ENCODE measurements at regions of chr14 and their contacts with region 1.

Region 1: GRCh38 chr14:35404449-35405303 is at the start of gene NFKBIA:
- DNase-seq: peak; percentile 94 to 96 (median 95)
- H3K4me3 ChIP-seq: peak within 1 kb of the TSS; percentile 88 to 98
- H3K4me3 Mint-ChIP-seq: peak within 1 kb of the TSS; percentile 93 to 97 (median 95)
- H3K27ac ChIP-seq: peak within 1 kb of the TSS; percentile 100
- H3K27ac Mint-ChIP-seq: peak within 1 kb of the TSS; percentile 99 to 100 (median 99)
- H3K4me1 ChIP-seq: peaks cover 60% of the 10 kb centered on the region
- H3K4me1 Mint-ChIP-seq: peaks cover 34 to 71% (median 49%) of the 10 kb centered on the region in 4 donors
- H3K27me3 ChIP-seq: no peaks in the 10 kb centered on the region
- H3K27me3 Mint-ChIP-seq: peaks cover 0 to 2% of the 10 kb centered on the region in 2 donors
- total RNA-seq, gene NFKBIA: 119 to 120 TPM

Region 2: GRCh38 chr14:34875031-34875922 is 529.4 kb before region 1 on chr14 and contains the start of gene BAZ1A:
- CTCF ChIA-PET with region 1: no interaction called
- POLR2A ChIA-PET with region 1: interaction called, 3 read pairs
- intact Hi-C with region 1: loop called (anchors 2 kb)
- DNase-seq: peak; percentile 53 to 67 (median 57)
- H3K4me3 ChIP-seq: peak within 1 kb of the TSS; percentile 64 to 98
- H3K4me3 Mint-ChIP-seq: peak within 1 kb of the TSS; percentile 95 to 100 (median 100)
- H3K27ac ChIP-seq: peak within 1 kb of the TSS; percentile 100
- H3K27ac Mint-ChIP-seq: peak within 1 kb of the TSS; percentile 98 to 100 (median 99)
- H3K4me1 ChIP-seq: peaks cover 38% of the 10 kb centered on the region
- H3K4me1 Mint-ChIP-seq: peaks cover 17 to 48% (median 33%) of the 10 kb centered on the region in 4 donors
- H3K27me3 ChIP-seq: no peaks in the 10 kb centered on the region
- H3K27me3 Mint-ChIP-seq: no peaks in the 10 kb centered on the region
- total RNA-seq, gene BAZ1A: 54.1 to 56.4 TPM

Region 3: GRCh38 chr14:35121887-35122695 is 282.6 kb before region 1 on chr14 and contains the starts of genes PPP2R3C and PRORP:
- CTCF ChIA-PET with region 1: interaction called, 5 read pairs
- POLR2A ChIA-PET with region 1: interaction called, 96 read pairs
- intact Hi-C with region 1: loop called (anchors 1 kb)
- DNase-seq: peak; percentile 93 to 97 (median 95)
- H3K4me3 ChIP-seq: peak within 1 kb of the TSS; percentile 94 to 99
- H3K4me3 Mint-ChIP-seq: peak within 1 kb of the TSS; percentile 97 to 100 (median 98)
- H3K27ac ChIP-seq: peak within 1 kb of the TSS; percentile 99
- H3K27ac Mint-ChIP-seq: peak within 1 kb of the TSS; percentile 99 to 100 (median 100)
- H3K4me1 ChIP-seq: peaks cover 72% of the 10 kb centered on the region
- H3K4me1 Mint-ChIP-seq: peaks cover 42 to 86% (median 64%) of the 10 kb centered on the region in 4 donors
- H3K27me3 ChIP-seq: no peaks in the 10 kb centered on the region
- H3K27me3 Mint-ChIP-seq: no peaks in the 10 kb centered on the region
- total RNA-seq, gene PPP2R3C: 36.1 to 41.0 TPM
- total RNA-seq, gene PRORP: 38.9 to 39.4 TPM

Region 4: DNA sequence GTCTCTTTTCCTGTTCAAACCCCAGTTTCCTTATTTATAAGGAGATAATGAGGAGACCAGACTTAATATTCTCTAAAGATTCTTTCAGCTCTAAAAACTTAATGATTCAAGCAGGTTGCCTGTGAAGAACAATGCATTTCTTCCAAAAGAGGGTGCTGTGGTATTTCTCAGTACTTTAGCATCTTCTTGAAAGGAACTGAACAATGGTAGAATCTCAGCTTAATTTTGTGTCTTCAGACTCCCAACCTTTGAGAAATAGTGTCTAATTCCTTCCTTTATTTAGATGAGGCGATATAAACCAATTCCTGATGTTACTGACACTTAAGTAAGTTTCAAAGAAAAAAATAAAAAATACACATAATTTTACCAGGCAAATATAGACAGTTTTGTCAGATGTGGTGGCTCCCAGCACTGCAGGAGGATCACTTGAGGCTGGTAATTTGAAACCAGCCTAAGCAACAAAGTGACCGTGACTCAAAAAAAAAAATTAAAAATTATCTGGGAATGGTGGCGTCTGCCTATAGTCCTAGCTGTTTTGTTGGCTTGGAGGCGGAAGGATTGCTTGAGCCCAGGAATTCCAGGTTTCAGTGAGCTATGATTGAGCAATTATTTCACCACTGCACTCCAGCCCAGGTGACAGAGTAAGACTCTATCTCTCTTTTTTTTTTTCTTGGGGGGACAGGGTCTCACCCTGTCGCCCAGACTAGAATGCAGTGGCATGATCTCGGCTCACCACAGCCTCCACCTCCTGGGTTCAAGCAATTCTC is 189.4 kb before region 1 on chr14:
- CTCF ChIA-PET with region 1: interaction called, 6 read pairs
- POLR2A ChIA-PET with region 1: interaction called, 4 read pairs
- intact Hi-C with region 1: loop called (anchors 1 kb)
- DNase-seq: peak in 1 of 5 donors; percentile 24
- H3K4me3 ChIP-seq: no peak overlapping the region
- H3K4me3 Mint-ChIP-seq: no peak overlapping the region
- H3K27ac ChIP-seq: no peak overlapping the region
- H3K27ac Mint-ChIP-seq: peak overlapping the region in 4 of 7 donors; percentile 15 to 81 (median 68)
- H3K4me1 ChIP-seq: peaks cover 7% of the 10 kb centered on the region
- H3K4me1 Mint-ChIP-seq: peaks cover 10 to 29% (median 15%) of the 10 kb centered on the region in 4 donors
- H3K27me3 ChIP-seq: no peaks in the 10 kb centered on the region
- H3K27me3 Mint-ChIP-seq: no peaks in the 10 kb centered on the region

Region 5: DNA sequence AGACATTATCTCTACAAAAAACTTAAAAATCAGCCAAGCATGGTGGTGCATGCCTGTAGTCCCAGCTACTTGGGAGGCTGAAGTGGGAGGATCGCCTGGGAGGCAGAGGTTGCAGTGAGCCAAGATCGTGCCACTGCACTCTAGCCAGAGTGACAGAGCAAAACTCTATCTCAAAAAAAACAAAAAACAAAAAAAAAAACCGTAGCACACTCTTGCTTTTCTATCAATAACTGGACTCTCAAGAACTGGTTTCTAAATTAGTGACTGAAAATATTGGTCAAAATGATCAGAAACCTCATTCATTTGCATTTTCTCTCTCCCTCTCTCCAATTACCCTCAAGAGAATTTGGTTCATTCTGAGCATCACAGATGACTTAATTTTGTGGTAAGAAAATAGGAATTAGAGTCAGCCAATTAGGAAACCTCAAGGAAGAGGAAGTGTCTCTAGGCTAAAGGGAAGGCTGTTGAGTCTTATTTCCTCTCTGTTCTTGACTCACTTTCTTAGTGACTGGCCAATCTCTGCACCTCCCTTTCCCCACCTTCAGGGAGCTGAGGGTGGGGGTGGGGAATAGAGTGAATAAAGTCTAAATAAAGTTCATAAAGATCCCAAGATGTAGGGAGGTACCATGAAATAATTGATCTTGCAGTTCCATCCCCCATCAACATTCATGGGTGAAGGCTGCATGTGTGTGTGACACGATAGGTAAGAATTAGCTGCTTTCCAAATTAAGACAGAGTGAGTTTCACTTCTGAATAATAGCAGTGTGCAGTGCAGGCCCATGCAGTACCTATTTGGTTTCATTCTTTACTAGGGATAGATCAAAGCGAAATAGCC is 119.3 kb before region 1 on chr14:
- CTCF ChIA-PET with region 1: interaction called, 11 read pairs
- POLR2A ChIA-PET with region 1: interaction called, 167 read pairs
- intact Hi-C with region 1: no loop called
- DNase-seq: peak in 1 of 5 donors; percentile 6
- H3K4me3 ChIP-seq: no peak overlapping the region
- H3K4me3 Mint-ChIP-seq: peak overlapping the region in 7 of 8 donors; percentile 0 to 67 (median 48)
- H3K27ac ChIP-seq: peak overlapping the region; percentile 50
- H3K27ac Mint-ChIP-seq: peak overlapping the region; percentile 67 to 93 (median 85)
- H3K4me1 ChIP-seq: peaks cover 36% of the 10 kb centered on the region
- H3K4me1 Mint-ChIP-seq: peaks cover 30 to 45% (median 35%) of the 10 kb centered on the region in 4 donors
- H3K27me3 ChIP-seq: no peaks in the 10 kb centered on the region
- H3K27me3 Mint-ChIP-seq: no peaks in the 10 kb centered on the region

Region 6: DNA sequence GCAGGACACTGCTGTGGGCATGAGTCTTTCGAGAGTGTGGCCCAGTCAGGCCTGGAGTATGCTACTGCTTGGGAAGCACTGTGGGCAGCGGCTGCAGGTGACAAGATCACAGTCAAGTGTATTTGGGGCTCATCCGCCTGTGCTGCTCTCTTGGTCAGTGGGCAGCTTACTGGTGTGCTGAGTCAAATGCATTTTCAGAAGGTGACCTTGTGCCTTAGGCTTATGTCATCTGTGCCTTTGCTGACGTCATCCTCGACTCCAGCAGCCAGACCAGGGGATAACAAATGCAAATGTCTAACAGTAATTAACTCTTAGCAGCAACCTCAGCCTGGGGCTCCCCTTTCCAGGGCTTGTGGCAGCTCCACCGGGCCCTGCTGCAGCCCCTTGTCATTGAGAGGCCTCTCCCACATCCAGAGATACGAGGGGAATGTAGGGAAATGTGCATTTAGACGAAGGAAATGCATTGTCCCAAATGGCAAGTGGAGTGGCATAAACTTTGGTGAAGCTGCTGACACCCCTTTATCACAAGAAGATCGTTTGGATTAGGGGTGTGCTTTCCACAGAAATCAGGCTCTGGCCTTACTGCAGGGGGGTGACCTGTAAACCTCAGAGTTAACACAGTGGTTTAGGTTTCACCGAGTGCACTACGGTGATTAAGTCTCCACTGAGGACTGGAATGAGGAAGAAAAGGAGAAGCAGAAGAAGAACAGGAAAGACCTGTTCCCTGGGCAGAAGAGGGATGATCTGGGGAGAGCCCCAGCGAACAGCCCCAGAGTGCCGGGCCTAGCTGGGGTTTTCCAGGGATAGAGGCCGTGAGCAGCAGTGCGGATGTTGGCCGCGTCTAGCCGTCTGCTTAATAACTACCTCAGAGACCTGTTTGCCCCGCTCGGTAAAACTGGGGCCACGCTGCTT is 72.8 kb before region 1 on chr14:
- CTCF ChIA-PET with region 1: interaction called, 8 read pairs
- POLR2A ChIA-PET with region 1: interaction called, 23 read pairs
- intact Hi-C with region 1: loop called (anchors 5 kb)
- DNase-seq: no peak
- H3K4me3 ChIP-seq: no peak overlapping the region
- H3K4me3 Mint-ChIP-seq: peak overlapping the region in 4 of 8 donors; percentile 10 to 72 (median 43)
- H3K27ac ChIP-seq: no peak overlapping the region
- H3K27ac Mint-ChIP-seq: peak overlapping the region; percentile 35 to 97 (median 86)
- H3K4me1 ChIP-seq: peaks cover 21% of the 10 kb centered on the region
- H3K4me1 Mint-ChIP-seq: peaks cover 17 to 31% (median 25%) of the 10 kb centered on the region in 4 donors
- H3K27me3 ChIP-seq: no peaks in the 10 kb centered on the region
- H3K27me3 Mint-ChIP-seq: no peaks in the 10 kb centered on the region

Region 7: GRCh38 chr14:35416108-35416750 is 11.6 kb after region 1 on chr14:
- CTCF ChIA-PET with region 1: interaction called, 81 read pairs
- POLR2A ChIA-PET with region 1: interaction called, 159 read pairs
- intact Hi-C with region 1: loop called (anchors 1 kb)
- DNase-seq: peak; percentile 32 to 91 (median 54)
- H3K4me3 ChIP-seq: no peak overlapping the region
- H3K4me3 Mint-ChIP-seq: peak overlapping the region; percentile 8 to 84 (median 68)
- H3K27ac ChIP-seq: peak overlapping the region; percentile 72
- H3K27ac Mint-ChIP-seq: peak overlapping the region; percentile 86 to 96 (median 92)
- H3K4me1 ChIP-seq: peaks cover 40% of the 10 kb centered on the region
- H3K4me1 Mint-ChIP-seq: peaks cover 36 to 49% (median 41%) of the 10 kb centered on the region in 4 donors
- H3K27me3 ChIP-seq: no peaks in the 10 kb centered on the region
- H3K27me3 Mint-ChIP-seq: no peaks in the 10 kb centered on the region

Region 8: DNA sequence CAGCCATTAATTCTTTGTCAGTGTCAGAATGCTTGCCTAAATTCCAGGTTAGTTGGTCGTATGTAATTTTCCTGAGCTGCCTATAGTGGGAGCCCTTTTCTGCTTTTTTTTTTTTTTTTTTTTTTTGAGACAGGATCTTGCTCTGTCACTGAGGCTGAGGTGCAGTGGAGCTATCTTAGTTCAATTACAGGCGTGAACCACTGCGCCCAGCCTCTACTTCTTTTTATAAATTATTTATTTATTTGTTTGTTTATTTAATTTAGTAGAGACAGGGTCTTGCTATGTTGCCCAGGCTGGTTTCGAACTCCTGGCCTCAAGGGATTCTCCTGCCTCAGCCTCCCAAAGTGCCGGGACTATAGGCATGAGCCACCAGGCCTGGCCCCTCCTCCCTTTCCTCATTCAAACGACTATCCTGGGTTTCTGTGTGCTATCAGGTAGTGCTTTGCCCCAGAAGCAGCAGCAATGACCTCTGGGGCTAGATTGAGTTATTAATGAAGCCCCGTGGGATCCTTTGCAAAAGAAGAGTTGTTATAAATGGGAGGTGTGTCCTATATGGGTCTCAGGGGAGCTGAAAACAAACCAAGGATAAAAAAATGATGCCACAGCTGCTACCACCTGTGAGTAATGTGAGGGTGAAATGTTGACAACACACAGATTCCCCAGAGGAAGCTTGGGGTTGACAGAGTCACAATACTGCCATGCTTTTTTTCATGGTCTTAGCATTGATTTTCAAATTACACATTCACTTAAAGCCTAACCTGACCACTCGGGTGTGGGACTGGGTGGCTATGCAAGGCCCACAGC is 34.4 kb after region 1 on chr14:
- CTCF ChIA-PET with region 1: no interaction called
- POLR2A ChIA-PET with region 1: no interaction called
- intact Hi-C with region 1: no loop called
- DNase-seq: no peak
- H3K4me3 ChIP-seq: no peak overlapping the region
- H3K4me3 Mint-ChIP-seq: no peak overlapping the region
- H3K27ac ChIP-seq: no peak overlapping the region
- H3K27ac Mint-ChIP-seq: no peak overlapping the region
- H3K4me1 ChIP-seq: no peaks in the 10 kb centered on the region
- H3K4me1 Mint-ChIP-seq: no peaks in the 10 kb centered on the region
- H3K27me3 ChIP-seq: no peaks in the 10 kb centered on the region
- H3K27me3 Mint-ChIP-seq: no peaks in the 10 kb centered on the region